Activated CD8-positive, alpha-beta T cell treated with anti-CD3 and anti-CD28 coated beads for 36 hours (primary cell): ENCODE measurements at regions of chr11 and their contacts with region 1.

Region 1: GRCh38 chr11:77994412-77995362 is at the start of gene INTS4:
- DNase-seq: peak; percentile 99
- ATAC-seq: peak; percentile 99
- H3K4me3 Mint-ChIP-seq: peak within 1 kb of the TSS; percentile 97
- H3K27ac Mint-ChIP-seq: peak within 1 kb of the TSS; percentile 96
- H3K4me1 Mint-ChIP-seq: peaks cover 17% of the 10 kb centered on the region
- H3K27me3 Mint-ChIP-seq: no peaks in the 10 kb centered on the region
- CTCF ChIP-seq: no peak
- total RNA-seq, gene INTS4: 44.4 to 45.8 TPM

Region 2: DNA sequence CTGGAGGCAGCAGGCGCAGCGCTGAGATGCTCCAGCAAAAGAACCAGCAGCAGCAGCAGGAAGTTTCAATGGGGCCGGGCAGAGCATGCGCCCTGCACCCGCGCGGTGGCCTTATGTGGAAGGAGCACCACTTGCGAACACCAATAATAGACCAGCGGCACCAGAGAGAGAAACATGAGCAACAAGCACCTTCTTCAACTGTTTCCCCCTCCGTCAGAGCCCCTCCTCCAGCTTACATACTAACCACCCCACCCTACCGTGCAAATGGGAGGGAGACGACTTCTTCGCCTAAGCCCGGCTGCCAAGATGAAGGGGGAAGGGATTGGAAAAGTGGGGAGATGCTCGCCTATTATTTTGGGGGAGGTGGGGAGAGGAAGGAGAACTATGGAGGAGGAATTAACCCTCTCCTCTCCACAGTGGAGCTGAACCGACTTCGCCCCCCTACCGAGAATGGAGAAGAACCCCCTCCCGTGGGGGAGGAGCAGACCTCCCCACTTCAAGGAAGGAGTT is 175.2 kb before region 1 on chr11:
- CTCF ChIA-PET with region 1: interaction called, 8 read pairs
- POLR2A ChIA-PET with region 1: interaction called, 9 read pairs
- intact Hi-C with region 1: loop called (anchors 10 kb)
- DNase-seq: peak; percentile 93
- ATAC-seq: peak; percentile 66
- H3K4me3 Mint-ChIP-seq: peak overlapping the region; percentile 96
- H3K27ac Mint-ChIP-seq: peak overlapping the region; percentile 98
- H3K4me1 Mint-ChIP-seq: peaks cover 35% of the 10 kb centered on the region
- H3K27me3 Mint-ChIP-seq: no peaks in the 10 kb centered on the region
- CTCF ChIP-seq: peak; percentile 16

Region 3: DNA sequence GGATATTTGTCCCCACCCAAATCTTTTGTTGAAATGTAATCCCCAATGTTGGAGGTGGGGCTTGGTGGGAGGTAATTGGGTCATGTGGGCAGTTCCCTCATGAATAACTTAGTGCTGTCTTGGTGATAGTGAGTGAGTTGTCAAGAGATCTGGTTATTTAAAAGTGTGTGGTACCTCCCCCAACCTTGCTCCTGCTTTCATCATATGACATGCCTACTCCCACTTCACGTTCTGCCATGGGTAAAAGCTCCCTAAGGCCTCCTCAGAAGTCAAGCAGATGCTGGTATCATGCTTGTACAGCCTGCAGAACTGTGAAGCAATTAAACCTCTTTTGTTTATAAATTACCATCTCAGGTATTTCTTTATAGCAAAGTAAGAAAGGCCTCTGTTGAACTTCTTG is 143.2 kb before region 1 on chr11:
- CTCF ChIA-PET with region 1: no interaction called
- POLR2A ChIA-PET with region 1: no interaction called
- intact Hi-C with region 1: no loop called
- DNase-seq: no peak
- ATAC-seq: no peak
- H3K4me3 Mint-ChIP-seq: no peak overlapping the region
- H3K27ac Mint-ChIP-seq: no peak overlapping the region
- H3K4me1 Mint-ChIP-seq: no peaks in the 10 kb centered on the region
- H3K27me3 Mint-ChIP-seq: no peaks in the 10 kb centered on the region
- CTCF ChIP-seq: no peak

Region 4: GRCh38 chr11:78010310-78010709 is 15.6 kb after region 1 on chr11:
- CTCF ChIA-PET with region 1: interaction called, 10 read pairs
- POLR2A ChIA-PET with region 1: interaction called, 7 read pairs
- intact Hi-C with region 1: no loop called
- DNase-seq: no peak
- ATAC-seq: no peak
- H3K4me3 Mint-ChIP-seq: no peak overlapping the region
- H3K27ac Mint-ChIP-seq: no peak overlapping the region
- H3K4me1 Mint-ChIP-seq: no peaks in the 10 kb centered on the region
- H3K27me3 Mint-ChIP-seq: peaks cover 1% of the 10 kb centered on the region
- CTCF ChIP-seq: no peak

Region 5: GRCh38 chr11:78069465-78069864 is 74.8 kb after region 1 on chr11:
- CTCF ChIA-PET with region 1: no interaction called
- POLR2A ChIA-PET with region 1: no interaction called
- intact Hi-C with region 1: no loop called
- DNase-seq: no peak
- ATAC-seq: no peak
- H3K4me3 Mint-ChIP-seq: no peak overlapping the region
- H3K27ac Mint-ChIP-seq: no peak overlapping the region
- H3K4me1 Mint-ChIP-seq: peaks cover 5% of the 10 kb centered on the region
- H3K27me3 Mint-ChIP-seq: no peaks in the 10 kb centered on the region
- CTCF ChIP-seq: no peak